SK-N-SH (cell line): ENCODE measurements at regions of chr6 and their contacts with region 1.

Region 1: GRCh38 chr6:71190809-71191208 is 97.8 kb upstream of the OGFRL1 start:
- DNase-seq: peak; percentile 10
- H3K4me3 ChIP-seq: no peak overlapping the region
- H3K27ac ChIP-seq: no peak overlapping the region
- H3K4me1 ChIP-seq: no peaks in the 10 kb centered on the region
- H3K27me3 ChIP-seq: no peaks in the 10 kb centered on the region
- CTCF ChIP-seq: peak; percentile 67
- EP300 ChIP-seq: no peak
- RAD21 ChIP-seq: peak; percentile 80

Region 2: GRCh38 chr6:71072508-71072907 is 118.3 kb before region 1 on chr6:
- CTCF ChIA-PET with region 1: no interaction called
- POLR2A ChIA-PET with region 1: no interaction called
- DNase-seq: no peak
- H3K4me3 ChIP-seq: no peak overlapping the region
- H3K27ac ChIP-seq: no peak overlapping the region
- H3K4me1 ChIP-seq: no peaks in the 10 kb centered on the region
- H3K27me3 ChIP-seq: no peaks in the 10 kb centered on the region
- CTCF ChIP-seq: no peak
- EP300 ChIP-seq: no peak
- RAD21 ChIP-seq: no peak

Region 3: DNA sequence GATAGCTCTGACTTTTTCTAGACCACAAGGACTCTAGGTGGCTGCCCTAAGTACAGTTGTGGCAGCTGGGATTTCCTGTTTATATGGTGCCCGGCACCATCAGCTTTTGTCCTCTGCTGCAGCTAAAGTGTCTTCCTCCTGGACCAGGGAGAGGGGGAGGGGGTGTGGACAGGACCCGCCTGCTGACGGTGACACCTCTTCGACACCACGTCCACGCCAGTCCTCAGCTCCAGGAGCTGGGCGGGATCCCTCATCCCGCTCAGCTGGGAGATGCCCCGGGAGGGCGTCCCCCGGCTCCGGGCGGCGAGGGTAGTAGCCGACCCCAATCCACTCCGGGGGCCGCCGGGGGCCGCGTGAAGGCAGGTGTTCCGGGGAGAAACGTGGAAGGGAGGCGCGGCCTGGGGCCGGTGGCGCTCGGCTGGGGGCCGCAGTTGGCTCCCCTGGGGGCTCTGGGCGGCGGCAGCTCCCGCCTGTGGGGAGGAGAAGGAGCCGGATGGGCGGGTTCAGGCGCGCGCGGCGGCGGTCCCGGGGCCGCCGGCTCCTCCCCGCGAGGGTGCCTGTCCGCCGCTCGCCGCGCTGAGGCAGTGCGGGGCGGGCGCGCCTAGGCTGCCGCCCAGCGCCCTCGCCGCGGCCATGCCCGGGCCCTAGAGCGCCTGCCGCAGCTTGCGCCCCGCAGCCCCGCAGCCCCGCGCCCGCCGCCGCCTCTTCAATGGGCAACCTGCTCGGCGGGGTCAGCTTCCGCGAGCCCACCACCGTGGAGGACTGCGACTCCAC is 97.6 kb after region 1 on chr6 and contains the start of gene OGFRL1:
- CTCF ChIA-PET with region 1: interaction called, 17 read pairs
- POLR2A ChIA-PET with region 1: interaction called, 4 read pairs
- DNase-seq: peak; percentile 96
- H3K4me3 ChIP-seq: peak within 1 kb of the TSS; percentile 76 to 88
- H3K27ac ChIP-seq: peak within 1 kb of the TSS; percentile 61 to 80
- H3K4me1 ChIP-seq: peaks cover 0 to 13% of the 10 kb centered on the region in 2 experiments; a peak in 2 of 4 replicates
- H3K27me3 ChIP-seq: no peaks in the 10 kb centered on the region
- CTCF ChIP-seq: no peak
- EP300 ChIP-seq: no peak
- RAD21 ChIP-seq: 0 out of 2 replicates have a peak, but pooled peaks have one; percentile 1
- polyA plus RNA-seq, gene OGFRL1: 2.4 and 3.3 TPM in 2 replicates

Region 4: GRCh38 chr6:71349395-71349794 is 158.6 kb after region 1 on chr6:
- CTCF ChIA-PET with region 1: interaction called, 57 read pairs
- POLR2A ChIA-PET with region 1: no interaction called
- DNase-seq: peak; percentile 4
- H3K4me3 ChIP-seq: no peak overlapping the region; a peak in 1 of 4 replicates
- H3K27ac ChIP-seq: peak overlapping the region in 1 of 2 experiments; percentile 40; a peak in 1 of 4 replicates
- H3K4me1 ChIP-seq: peaks cover 0 to 3% of the 10 kb centered on the region in 2 experiments; a peak in 3 of 4 replicates
- H3K27me3 ChIP-seq: no peaks in the 10 kb centered on the region
- CTCF ChIP-seq: peak; percentile 82
- EP300 ChIP-seq: no peak
- RAD21 ChIP-seq: peak; percentile 75

Region 5: DNA sequence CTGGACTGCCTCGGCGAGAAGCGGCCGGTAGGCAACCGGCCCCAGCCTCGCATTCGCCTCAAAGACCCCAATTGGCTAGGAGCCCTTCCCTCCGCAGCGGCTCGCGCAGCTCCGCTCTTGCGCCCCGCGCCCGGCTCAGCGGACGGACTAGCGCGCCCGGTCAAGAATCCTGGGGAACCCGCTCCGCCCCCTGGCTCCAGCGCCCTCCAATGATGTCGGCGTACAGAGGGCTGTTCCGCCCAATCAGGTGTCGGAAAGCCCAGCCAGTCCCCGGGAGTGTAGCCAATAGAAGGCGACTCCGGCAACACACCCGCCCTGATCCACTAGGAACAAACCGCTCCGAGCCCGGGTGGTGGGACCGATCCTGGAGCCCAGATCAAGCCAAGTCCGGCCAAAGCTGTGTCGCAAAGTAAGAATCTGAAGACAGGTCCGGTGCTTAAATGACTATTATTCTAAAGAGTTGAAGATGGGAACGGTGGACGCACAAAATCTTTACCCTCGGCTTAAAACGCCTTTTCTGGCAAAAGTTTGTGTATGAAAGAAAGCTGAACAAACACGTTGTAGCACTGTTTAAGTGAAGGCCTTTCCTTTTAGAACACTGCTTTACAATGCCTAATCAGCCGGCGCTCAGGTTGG is 230.0 kb after region 1 on chr6:
- CTCF ChIA-PET with region 1: no interaction called
- POLR2A ChIA-PET with region 1: no interaction called
- DNase-seq: peak; percentile 92
- H3K4me3 ChIP-seq: peak overlapping the region; percentile 87 to 93
- H3K27ac ChIP-seq: peak overlapping the region; percentile 67 to 79
- H3K4me1 ChIP-seq: peaks cover 5 to 6% of the 10 kb centered on the region in 2 experiments; a peak in 2 of 4 replicates
- H3K27me3 ChIP-seq: no peaks in the 10 kb centered on the region
- CTCF ChIP-seq: no peak
- EP300 ChIP-seq: peak in 1 of 2 experiments; percentile 4; a peak in 1 of 4 replicates
- RAD21 ChIP-seq: no peak